ENCODE measurements at regions of chr10 and their contacts with region 1.

Region 1: GRCh38 chr10:49761789-49762565 is at the start of gene OGDHL:
- DNase-seq: peak; percentile 63
- ATAC-seq: peak; percentile 90 to 93
- total RNA-seq, gene OGDHL: 3.4 to 4.2 TPM

Region 2: GRCh38 chr10:49606981-49607535 is 154.9 kb before region 1 on chr10:
- intact Hi-C with region 1: loop called in 1 of 2 experiments (anchors 10 kb)
- DNase-seq: peak; percentile 74
- ATAC-seq: peak; percentile 79 to 81

Measured in left cardiac atrium (tissue), 4 donors.